AG04450 (cell line): ENCODE measurements at regions of chr10 and their contacts with region 1.

Region 1: GRCh38 chr10:91944880-91945630 is 21.5 kb downstream of the BTAF1 start:
- DNase-seq: no peak
- H3K4me3 ChIP-seq: no peak overlapping the region
- H3K27ac ChIP-seq: no peak overlapping the region
- H3K27me3 ChIP-seq: no peaks in the 10 kb centered on the region
- CTCF ChIP-seq: no peak

Region 2: GRCh38 chr10:92003258-92003657 is 58.2 kb after region 1 on chr10:
- CTCF ChIA-PET with region 1: no interaction called
- POLR2A ChIA-PET with region 1: no interaction called
- DNase-seq: no peak
- H3K4me3 ChIP-seq: no peak overlapping the region
- H3K27ac ChIP-seq: no peak overlapping the region
- H3K27me3 ChIP-seq: no peaks in the 10 kb centered on the region
- CTCF ChIP-seq: no peak

Region 3: GRCh38 chr10:92395271-92395670 is 450.2 kb after region 1 on chr10:
- CTCF ChIA-PET with region 1: no interaction called
- POLR2A ChIA-PET with region 1: interaction called, 16 read pairs
- DNase-seq: no peak
- H3K4me3 ChIP-seq: no peak overlapping the region
- H3K27ac ChIP-seq: no peak overlapping the region
- H3K27me3 ChIP-seq: no peaks in the 10 kb centered on the region
- CTCF ChIP-seq: no peak

Region 4: GRCh38 chr10:92486637-92487036 is 541.6 kb after region 1 on chr10:
- CTCF ChIA-PET with region 1: interaction called, 14 read pairs
- POLR2A ChIA-PET with region 1: no interaction called
- DNase-seq: no peak
- H3K4me3 ChIP-seq: no peak overlapping the region
- H3K27ac ChIP-seq: no peak overlapping the region
- H3K27me3 ChIP-seq: no peaks in the 10 kb centered on the region
- CTCF ChIP-seq: no peak

Region 5: GRCh38 chr10:92997620-92998019 is 1052.6 kb after region 1 on chr10:
- CTCF ChIA-PET with region 1: no interaction called
- POLR2A ChIA-PET with region 1: no interaction called
- DNase-seq: no peak
- H3K4me3 ChIP-seq: no peak overlapping the region
- H3K27ac ChIP-seq: no peak overlapping the region
- H3K27me3 ChIP-seq: no peaks in the 10 kb centered on the region
- CTCF ChIP-seq: no peak